PC-9 (cell line): ENCODE measurements at regions of chr2 and their contacts with region 1.

Region 1: DNA sequence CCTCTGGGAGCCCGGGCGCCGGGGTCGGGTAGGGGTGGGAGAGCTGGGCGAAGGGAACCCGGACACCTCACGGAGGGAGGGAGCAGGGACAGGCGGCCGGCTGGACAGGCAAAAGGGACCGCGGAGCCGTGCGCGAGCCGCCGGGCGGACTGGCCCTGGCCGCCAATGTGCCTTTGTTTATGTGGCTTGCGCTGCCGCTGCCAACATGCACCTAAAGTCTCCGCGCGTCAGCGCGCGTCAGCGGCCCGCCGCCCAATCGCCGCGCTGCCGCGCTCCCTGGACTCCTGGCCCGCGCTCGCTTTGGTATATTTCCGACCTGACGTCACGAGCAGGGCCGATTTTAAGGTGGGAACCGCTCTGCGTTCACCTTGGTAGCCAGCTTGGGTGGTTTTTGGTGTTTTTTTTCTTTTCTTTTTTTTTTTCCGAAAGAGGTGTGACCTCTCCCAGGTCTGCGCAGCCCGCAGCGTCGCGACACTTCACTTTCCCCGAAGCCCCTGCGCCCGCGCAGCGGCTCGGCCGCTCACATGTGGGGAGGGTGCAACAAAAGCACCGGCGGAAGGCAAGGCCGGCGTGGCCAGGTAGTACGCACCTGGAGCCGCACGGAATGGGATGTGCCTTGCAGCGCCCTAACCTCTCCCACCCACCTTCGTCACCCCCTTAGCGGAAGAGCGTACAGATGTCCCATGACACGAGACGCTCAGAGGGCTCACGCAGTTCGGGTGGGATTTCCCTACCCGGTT is at the start of gene NR4A2:
- DNase-seq: peak; percentile 73 to 81
- H3K4me3 ChIP-seq: peak within 1 kb of the TSS; percentile 74
- H3K27ac ChIP-seq: peak within 1 kb of the TSS; percentile 80
- H3K4me1 ChIP-seq: peaks cover 11% of the 10 kb centered on the region
- H3K27me3 ChIP-seq: no peaks in the 10 kb centered on the region
- CTCF ChIP-seq: no peak
- total RNA-seq, gene NR4A2: 2.3 and 3.0 TPM in 2 replicates

Region 2: DNA sequence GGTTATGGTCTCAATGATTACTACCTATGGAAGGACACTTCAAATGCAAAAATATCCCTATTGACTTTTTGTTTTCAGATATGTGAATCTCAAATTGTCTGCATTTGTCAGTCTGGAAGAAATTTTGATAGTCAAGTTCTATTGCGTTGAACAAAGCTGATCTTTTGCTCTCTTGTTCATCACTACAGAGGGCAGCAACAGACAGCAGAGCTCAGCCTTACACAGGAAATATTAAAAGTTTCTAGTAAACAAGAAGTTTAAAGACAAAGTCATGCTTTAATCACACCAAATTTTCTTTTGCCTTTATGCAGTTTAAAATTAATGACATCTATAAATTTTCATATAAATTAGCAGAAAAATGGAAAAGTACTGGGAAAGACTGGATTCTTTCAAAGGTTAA is 617.7 kb before region 1 on chr2:
- CTCF ChIA-PET with region 1: no interaction called
- POLR2A ChIA-PET with region 1: no interaction called
- intact Hi-C with region 1: loop called (anchors 10 kb)
- DNase-seq: no peak
- H3K4me3 ChIP-seq: no peak overlapping the region
- H3K27ac ChIP-seq: no peak overlapping the region
- H3K4me1 ChIP-seq: no peaks in the 10 kb centered on the region
- H3K27me3 ChIP-seq: no peaks in the 10 kb centered on the region
- CTCF ChIP-seq: no peak

Region 3: GRCh38 chr2:156065905-156066304 is 266.8 kb before region 1 on chr2:
- CTCF ChIA-PET with region 1: interaction called, 3 read pairs
- POLR2A ChIA-PET with region 1: no interaction called
- intact Hi-C with region 1: loop called (anchors 2 kb)
- DNase-seq: no peak
- H3K4me3 ChIP-seq: no peak overlapping the region
- H3K27ac ChIP-seq: no peak overlapping the region
- H3K4me1 ChIP-seq: no peaks in the 10 kb centered on the region
- H3K27me3 ChIP-seq: no peaks in the 10 kb centered on the region
- CTCF ChIP-seq: peak; percentile 40; the same call in 1 of the 2 replicates

Region 4: DNA sequence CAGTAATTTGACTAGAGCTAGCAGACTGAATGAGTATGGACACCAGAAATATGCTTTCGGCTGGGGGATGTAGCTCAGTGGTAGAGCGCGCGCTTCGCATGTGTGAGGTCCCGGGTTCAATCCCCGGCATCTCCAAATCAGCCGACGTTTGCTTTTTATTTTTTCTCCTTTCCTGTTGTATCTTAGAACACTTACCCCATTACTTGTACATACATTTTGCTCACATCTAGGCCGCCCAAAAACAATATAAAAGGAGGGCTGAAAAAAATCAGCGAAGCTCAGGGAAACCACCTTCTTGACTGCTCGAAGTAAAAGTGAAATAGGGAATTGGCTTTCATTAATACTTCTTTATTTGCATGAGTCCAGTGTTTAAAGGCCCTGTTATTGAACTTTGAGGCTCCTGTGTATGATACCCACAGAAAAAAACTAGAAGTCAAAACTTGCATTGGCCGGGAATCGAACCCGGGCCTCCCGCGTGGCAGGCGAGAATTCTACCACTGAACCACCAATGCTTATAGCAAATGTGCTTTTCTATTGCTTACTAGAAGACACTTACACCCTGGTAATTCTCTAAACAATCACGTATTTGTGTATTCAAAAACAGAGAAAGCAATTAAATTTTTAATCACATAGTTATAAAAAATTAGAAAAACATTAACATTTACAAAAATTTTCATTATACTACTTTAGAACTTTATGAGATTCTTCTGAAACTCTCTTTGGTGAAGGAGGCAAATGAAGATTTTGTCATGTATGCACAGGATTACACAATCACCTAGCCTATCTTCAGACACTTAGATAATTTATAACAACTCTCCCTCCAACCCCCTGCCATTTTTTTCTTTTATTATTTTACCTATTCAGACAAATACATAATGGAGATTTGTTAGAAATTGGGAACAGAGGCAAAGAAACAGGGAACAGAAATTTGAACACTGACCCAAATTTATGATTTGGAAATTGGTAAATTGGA is 68.3 kb after region 1 on chr2:
- CTCF ChIA-PET with region 1: interaction called, 9 read pairs
- POLR2A ChIA-PET with region 1: no interaction called
- intact Hi-C with region 1: loop called (anchors 1 kb)
- DNase-seq: peak; percentile 60 to 63
- H3K4me3 ChIP-seq: peak overlapping the region; percentile 84
- H3K27ac ChIP-seq: peak overlapping the region; percentile 83
- H3K4me1 ChIP-seq: peaks cover 26% of the 10 kb centered on the region
- H3K27me3 ChIP-seq: no peaks in the 10 kb centered on the region
- CTCF ChIP-seq: no peak

Region 5: DNA sequence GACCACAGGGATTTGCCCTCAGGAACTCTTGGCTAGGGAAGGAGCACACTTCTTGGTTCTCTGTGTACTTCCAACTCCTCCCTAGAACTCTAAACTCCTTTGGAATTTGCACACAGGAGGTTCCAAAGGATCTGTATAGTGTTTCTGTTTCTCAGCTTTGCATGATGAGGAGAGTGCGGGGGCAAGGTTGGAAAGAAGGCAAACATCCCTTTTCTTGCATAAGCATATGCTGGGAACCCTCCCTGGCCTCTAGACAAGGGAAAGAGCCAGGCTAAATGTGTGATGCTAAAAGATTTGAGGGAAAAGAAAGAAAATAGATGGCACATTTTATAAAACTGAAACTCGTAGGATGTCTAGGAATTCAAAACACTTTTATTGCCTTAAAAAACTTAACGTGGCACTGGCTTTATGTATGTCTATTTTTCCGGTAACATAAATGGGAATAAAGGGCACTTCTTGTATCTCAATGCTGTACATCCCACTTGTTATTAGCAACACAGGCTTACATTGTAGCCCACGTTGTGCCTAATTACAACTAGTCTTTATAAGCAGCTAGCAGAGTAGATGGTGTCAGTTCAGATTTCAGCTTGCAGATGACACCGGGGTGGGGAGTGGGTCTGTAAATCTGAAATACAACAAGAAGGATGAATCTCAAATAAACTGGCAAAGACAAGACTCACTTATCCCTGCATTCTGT is 269.3 kb after region 1 on chr2:
- CTCF ChIA-PET with region 1: no interaction called
- POLR2A ChIA-PET with region 1: interaction called, 12 read pairs
- intact Hi-C with region 1: no loop called
- DNase-seq: no peak
- H3K4me3 ChIP-seq: no peak overlapping the region
- H3K27ac ChIP-seq: no peak overlapping the region
- H3K4me1 ChIP-seq: no peaks in the 10 kb centered on the region
- H3K27me3 ChIP-seq: no peaks in the 10 kb centered on the region
- CTCF ChIP-seq: no peak

Region 6: DNA sequence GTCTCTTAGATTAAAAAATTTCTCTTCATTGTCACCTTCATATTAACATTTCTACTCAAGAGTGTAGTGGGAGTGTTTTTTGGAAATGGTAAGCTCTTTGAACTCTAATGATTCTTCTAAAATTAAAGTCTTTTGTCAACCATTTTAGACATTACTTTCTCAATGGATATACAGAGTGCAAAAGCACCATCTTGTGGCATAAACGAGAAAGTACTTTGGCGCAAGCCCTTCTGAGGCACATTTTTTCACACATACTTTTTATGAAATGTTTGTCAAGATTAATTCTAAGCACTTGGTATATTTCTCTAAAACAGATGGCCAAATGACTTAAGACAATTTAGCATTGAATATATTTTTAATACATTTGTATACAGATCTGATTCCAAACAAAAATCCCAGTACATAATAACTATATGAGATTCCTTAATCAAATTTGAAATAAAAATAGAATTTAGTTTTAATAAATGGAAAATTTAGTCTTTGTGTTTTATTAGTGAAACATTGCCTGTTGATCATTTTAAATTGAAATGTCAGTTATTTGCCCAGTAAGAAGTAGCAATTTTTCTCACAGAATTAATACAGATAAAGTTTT is 861.5 kb after region 1 on chr2:
- CTCF ChIA-PET with region 1: no interaction called
- POLR2A ChIA-PET with region 1: no interaction called
- intact Hi-C with region 1: loop called (anchors 5 kb)
- DNase-seq: peak in 1 of 2 experiments; percentile 3
- H3K4me3 ChIP-seq: no peak overlapping the region
- H3K27ac ChIP-seq: no peak overlapping the region
- H3K4me1 ChIP-seq: no peaks in the 10 kb centered on the region
- H3K27me3 ChIP-seq: no peaks in the 10 kb centered on the region
- CTCF ChIP-seq: peak; percentile 73